WTC11 (cell line): ENCODE measurements at regions of chr6 and their contacts with region 1.

Region 1: GRCh38 chr6:157269261-157269794 is 54.0 kb downstream of the TMEM242 start:
- DNase-seq: no peak
- ATAC-seq: no peak
- H3K4me3 Mint-ChIP-seq: no peak overlapping the region
- H3K27ac Mint-ChIP-seq: no peak overlapping the region
- H3K4me1 Mint-ChIP-seq: peaks cover 17% of the 10 kb centered on the region
- H3K27me3 Mint-ChIP-seq: peaks cover 11% of the 10 kb centered on the region
- CTCF ChIP-seq: no peak

Region 2: DNA sequence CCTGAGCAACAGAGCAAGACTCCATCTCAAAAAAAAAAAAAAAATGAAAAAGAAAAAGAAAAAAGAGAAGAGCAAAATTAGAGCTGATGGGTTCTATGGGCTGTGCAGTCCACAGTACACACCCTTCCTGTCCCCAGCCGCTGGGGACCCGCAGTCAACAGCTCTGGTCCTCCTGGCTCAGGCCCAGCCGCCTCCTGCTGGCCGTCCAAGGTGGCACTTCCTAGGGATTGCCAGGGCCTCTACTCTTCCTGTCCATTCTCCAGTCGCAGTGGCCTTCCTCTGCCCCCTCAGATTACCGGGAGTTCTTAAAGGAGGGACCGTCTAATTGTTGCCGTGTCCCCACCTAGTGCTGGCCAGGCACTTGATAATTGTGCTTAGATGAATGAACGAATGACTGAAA is 12.2 kb after region 1 on chr6:
- CTCF ChIA-PET with region 1: interaction called, 12 read pairs
- POLR2A ChIA-PET with region 1: no interaction called
- DNase-seq: peak; percentile 60
- ATAC-seq: peak; percentile 65
- H3K4me3 Mint-ChIP-seq: no peak overlapping the region
- H3K27ac Mint-ChIP-seq: no peak overlapping the region
- H3K4me1 Mint-ChIP-seq: peaks cover 13% of the 10 kb centered on the region
- H3K27me3 Mint-ChIP-seq: peaks cover 6% of the 10 kb centered on the region; the same call in 1 of the 2 replicates
- CTCF ChIP-seq: no peak

Region 3: GRCh38 chr6:157410045-157410444 is 140.7 kb after region 1 on chr6:
- CTCF ChIA-PET with region 1: no interaction called
- POLR2A ChIA-PET with region 1: no interaction called
- DNase-seq: no peak
- ATAC-seq: no peak
- H3K4me3 Mint-ChIP-seq: no peak overlapping the region
- H3K27ac Mint-ChIP-seq: no peak overlapping the region
- H3K4me1 Mint-ChIP-seq: peaks cover 27% of the 10 kb centered on the region
- H3K27me3 Mint-ChIP-seq: no peaks in the 10 kb centered on the region
- CTCF ChIP-seq: no peak